ENCODE measurements at regions of chr11 and their contacts with region 1.

Region 1: DNA sequence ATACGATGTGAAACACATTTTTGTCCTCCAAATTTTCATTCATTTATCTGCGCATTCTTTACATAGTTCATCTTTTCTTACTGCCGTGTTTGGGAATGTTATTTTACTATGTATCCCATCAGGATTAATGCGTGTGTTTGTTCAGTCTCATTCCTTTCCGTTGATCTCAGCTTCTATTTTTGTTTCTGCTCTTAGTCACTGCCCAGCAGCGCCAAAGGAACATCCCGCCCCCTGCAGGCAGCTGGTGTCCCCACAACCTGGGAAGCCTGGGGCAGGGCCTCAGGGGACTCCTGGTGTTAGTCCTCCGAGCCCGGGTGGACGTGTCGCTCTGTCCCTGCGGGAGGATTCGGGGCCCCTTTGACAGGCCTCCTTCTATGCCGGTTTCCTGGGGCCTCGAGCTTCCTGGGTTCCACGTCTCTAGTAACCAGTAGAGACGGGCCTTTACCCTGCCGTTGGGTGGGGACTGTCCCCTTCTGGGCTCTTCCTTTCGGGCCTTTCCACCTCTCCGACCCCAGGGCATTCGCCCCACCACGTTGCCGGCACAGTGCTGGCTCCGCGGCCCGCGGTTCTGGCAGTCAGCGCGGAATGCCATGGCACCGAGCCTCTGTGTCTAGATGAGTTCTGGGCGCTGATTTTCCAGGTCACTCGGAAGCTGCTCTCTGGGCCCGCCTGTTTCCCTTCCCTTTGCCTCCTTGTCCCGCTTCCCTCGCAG is 39.8 kb downstream of the WEE1 start:
- DNase-seq: peak; percentile 93
- ATAC-seq: peak; percentile 75
- H3K4me3 Mint-ChIP-seq: peak overlapping the region; percentile 83
- H3K27ac Mint-ChIP-seq: peak overlapping the region; percentile 98
- H3K4me1 Mint-ChIP-seq: peaks cover 27% of the 10 kb centered on the region
- H3K27me3 Mint-ChIP-seq: no peaks in the 10 kb centered on the region

Region 2: GRCh38 chr11:9025101-9025850 is 588.0 kb before region 1 on chr11:
- CTCF ChIA-PET with region 1: no interaction called
- DNase-seq: no peak
- ATAC-seq: no peak
- H3K4me3 Mint-ChIP-seq: no peak overlapping the region
- H3K27ac Mint-ChIP-seq: no peak overlapping the region
- H3K4me1 Mint-ChIP-seq: peaks cover 10% of the 10 kb centered on the region
- H3K27me3 Mint-ChIP-seq: peaks cover 34% of the 10 kb centered on the region

Region 3: GRCh38 chr11:9460322-9461067 is 152.8 kb before region 1 on chr11 and contains the start of gene ZNF143:
- CTCF ChIA-PET with region 1: no interaction called
- DNase-seq: peak; percentile 100
- ATAC-seq: peak; percentile 90
- H3K4me3 Mint-ChIP-seq: peak within 1 kb of the TSS; percentile 97
- H3K27ac Mint-ChIP-seq: peak within 1 kb of the TSS; percentile 99
- H3K4me1 Mint-ChIP-seq: peaks cover 32% of the 10 kb centered on the region
- H3K27me3 Mint-ChIP-seq: no peaks in the 10 kb centered on the region
- total RNA-seq, gene ZNF143: 39.5 to 44.2 TPM

Region 4: GRCh38 chr11:9565822-9566560 is 47.3 kb before region 1 on chr11:
- CTCF ChIA-PET with region 1: interaction called, 11 read pairs
- DNase-seq: peak; percentile 87
- ATAC-seq: peak; percentile 97
- H3K4me3 Mint-ChIP-seq: peak overlapping the region; percentile 40
- H3K27ac Mint-ChIP-seq: peak overlapping the region; percentile 89
- H3K4me1 Mint-ChIP-seq: peaks cover 51% of the 10 kb centered on the region
- H3K27me3 Mint-ChIP-seq: peaks cover 5% of the 10 kb centered on the region

Region 5: GRCh38 chr11:9594267-9595046 is 18.8 kb before region 1 on chr11:
- CTCF ChIA-PET with region 1: interaction called, 26 read pairs
- DNase-seq: peak; percentile 26
- ATAC-seq: no peak
- H3K4me3 Mint-ChIP-seq: no peak overlapping the region
- H3K27ac Mint-ChIP-seq: no peak overlapping the region
- H3K4me1 Mint-ChIP-seq: no peaks in the 10 kb centered on the region
- H3K27me3 Mint-ChIP-seq: peaks cover 6% of the 10 kb centered on the region

Region 6: DNA sequence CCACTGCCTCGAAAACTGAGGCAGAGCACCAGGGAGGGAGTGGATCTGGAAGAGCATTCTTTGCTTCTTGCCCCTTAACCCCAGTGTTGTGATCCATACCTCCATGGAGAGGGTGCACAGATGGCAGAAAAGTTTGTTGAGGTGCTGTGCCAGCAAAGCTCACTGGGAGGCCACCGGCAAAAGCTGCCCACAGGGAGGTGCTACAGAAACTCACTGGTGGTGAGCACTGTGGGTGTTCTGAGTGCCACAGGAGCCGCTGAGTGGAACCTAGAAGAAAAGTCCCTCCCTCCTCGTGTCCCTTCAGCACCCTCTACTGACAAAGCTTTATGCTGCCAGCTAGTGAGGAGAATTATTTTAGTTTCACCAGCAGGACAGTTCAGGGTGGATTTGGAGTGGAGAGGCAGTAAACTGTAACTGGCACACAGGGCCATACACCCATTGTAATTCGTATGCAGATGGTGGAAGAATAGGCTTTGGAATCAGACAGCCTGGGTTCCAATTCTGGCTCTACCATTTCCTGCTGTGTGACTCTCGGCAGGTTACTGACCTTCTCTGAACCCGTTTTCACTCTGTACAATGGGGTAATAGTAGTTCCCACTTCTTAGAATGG is 135.2 kb after region 1 on chr11:
- CTCF ChIA-PET with region 1: interaction called, 51 read pairs
- DNase-seq: peak; percentile 87
- ATAC-seq: peak; percentile 95
- H3K4me3 Mint-ChIP-seq: no peak overlapping the region
- H3K27ac Mint-ChIP-seq: no peak overlapping the region
- H3K4me1 Mint-ChIP-seq: peaks cover 33% of the 10 kb centered on the region
- H3K27me3 Mint-ChIP-seq: no peaks in the 10 kb centered on the region

Region 7: DNA sequence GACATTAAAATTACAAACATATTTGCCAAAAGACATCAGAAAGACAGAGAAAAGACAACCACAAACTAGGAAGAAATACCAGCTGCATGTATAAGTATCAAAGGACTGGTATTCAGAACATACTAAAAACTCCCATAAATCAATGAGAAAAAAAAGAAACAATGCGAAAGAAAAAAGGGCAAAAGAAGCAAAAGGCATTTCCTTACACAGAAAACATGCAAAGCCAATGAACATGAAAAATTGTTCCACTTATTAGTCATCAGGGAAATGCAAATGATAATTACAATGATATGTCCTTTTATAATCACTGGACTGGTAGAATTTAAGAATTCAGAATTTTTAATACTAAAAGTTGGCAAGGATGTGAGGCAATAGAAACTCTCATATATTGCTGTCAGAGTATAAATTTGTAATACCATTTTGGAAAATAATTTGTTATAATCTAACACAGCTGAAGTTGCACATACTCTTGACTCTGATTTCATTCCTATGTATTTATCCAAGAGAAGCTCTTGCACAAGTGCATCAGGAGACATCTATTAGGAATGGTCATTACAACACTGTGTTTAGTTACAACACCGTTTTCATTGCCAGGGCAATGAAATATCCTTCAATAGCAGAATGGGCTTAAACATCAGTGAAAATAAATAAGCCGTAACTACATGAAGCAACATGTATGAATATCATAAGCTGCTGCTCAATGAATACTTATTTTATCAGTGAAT is 330.3 kb after region 1 on chr11:
- CTCF ChIA-PET with region 1: no interaction called
- DNase-seq: no peak
- ATAC-seq: no peak
- H3K4me3 Mint-ChIP-seq: no peak overlapping the region
- H3K27ac Mint-ChIP-seq: no peak overlapping the region
- H3K4me1 Mint-ChIP-seq: no peaks in the 10 kb centered on the region
- H3K27me3 Mint-ChIP-seq: no peaks in the 10 kb centered on the region

Region 8: GRCh38 chr11:10050561-10050960 is 437.3 kb after region 1 on chr11:
- CTCF ChIA-PET with region 1: no interaction called
- DNase-seq: no peak
- ATAC-seq: no peak
- H3K4me3 Mint-ChIP-seq: no peak overlapping the region
- H3K27ac Mint-ChIP-seq: no peak overlapping the region
- H3K4me1 Mint-ChIP-seq: no peaks in the 10 kb centered on the region
- H3K27me3 Mint-ChIP-seq: no peaks in the 10 kb centered on the region